ENCODE measurements at regions of chr6 and their contacts with region 1.

Region 1: GRCh38 chr6:27132532-27133280 is 114.8 kb upstream of the PRSS16 start:
- DNase-seq: no peak
- ATAC-seq: peak; percentile 84
- H3K4me3 ChIP-seq: peak overlapping the region; percentile 70 to 81 (median 74)
- H3K4me3 Mint-ChIP-seq: no peak overlapping the region
- H3K27ac ChIP-seq: peak overlapping the region; percentile 83
- H3K27ac Mint-ChIP-seq: no peak overlapping the region
- H3K4me1 ChIP-seq: peaks cover 14 to 24% of the 10 kb centered on the region in 2 donors
- H3K4me1 Mint-ChIP-seq: peaks cover 23% of the 10 kb centered on the region
- H3K27me3 ChIP-seq: no peaks in the 10 kb centered on the region
- H3K27me3 Mint-ChIP-seq: no peaks in the 10 kb centered on the region
- CTCF ChIP-seq: no peak

Region 2: GRCh38 chr6:26025894-26026832 is 1106.5 kb before region 1 on chr6:
- CTCF ChIA-PET with region 1: no interaction called
- POLR2A ChIA-PET with region 1: interaction called, 4 read pairs
- intact Hi-C with region 1: loop called (anchors 1 kb)
- DNase-seq: peak; percentile 97
- ATAC-seq: peak; percentile 35
- H3K4me3 ChIP-seq: peak overlapping the region; percentile 58 to 99 (median 88)
- H3K4me3 Mint-ChIP-seq: peak overlapping the region; percentile 98
- H3K27ac ChIP-seq: peak overlapping the region; percentile 88 to 97
- H3K27ac Mint-ChIP-seq: peak overlapping the region; percentile 98
- H3K4me1 ChIP-seq: peaks cover 23 to 32% of the 10 kb centered on the region in 2 donors
- H3K4me1 Mint-ChIP-seq: peaks cover 49% of the 10 kb centered on the region
- H3K27me3 ChIP-seq: no peaks in the 10 kb centered on the region
- H3K27me3 Mint-ChIP-seq: no peaks in the 10 kb centered on the region
- CTCF ChIP-seq: peak; percentile 92

Region 3: DNA sequence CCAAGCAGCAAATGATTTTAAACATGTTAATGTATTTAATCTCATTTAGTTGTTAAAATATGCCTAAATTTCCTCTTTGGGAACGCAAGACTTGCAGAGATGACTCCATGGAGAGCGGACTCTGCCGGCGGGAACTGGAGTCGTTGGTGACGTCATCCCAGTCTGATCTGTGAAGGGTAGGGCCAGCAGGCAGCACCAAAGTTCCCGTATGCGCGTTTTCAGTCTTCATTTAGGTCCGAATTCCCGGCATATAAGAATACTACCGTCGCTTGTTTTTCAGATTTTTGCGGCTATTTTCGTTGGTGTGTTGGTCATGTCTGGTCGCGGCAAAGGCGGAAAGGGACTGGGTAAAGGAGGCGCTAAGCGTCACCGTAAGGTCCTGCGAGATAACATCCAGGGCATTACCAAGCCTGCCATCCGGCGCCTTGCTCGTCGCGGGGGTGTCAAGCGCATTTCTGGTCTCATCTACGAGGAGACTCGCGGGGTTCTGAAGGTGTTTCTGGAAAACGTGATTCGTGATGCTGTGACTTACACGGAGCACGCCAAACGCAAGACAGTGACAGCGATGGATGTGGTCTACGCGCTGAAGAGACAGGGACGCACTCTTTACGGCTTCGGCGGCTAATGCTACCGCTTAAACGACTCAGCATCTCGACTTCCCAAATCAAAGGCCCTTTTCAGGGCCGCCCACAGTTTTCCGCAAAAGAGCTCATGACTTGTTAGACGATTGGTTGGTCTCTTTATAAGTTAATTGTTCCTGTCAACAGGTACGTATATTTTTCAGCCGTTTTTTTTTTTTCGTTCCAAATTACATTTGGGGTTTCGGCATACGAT is 928.2 kb before region 1 on chr6:
- CTCF ChIA-PET with region 1: no interaction called
- POLR2A ChIA-PET with region 1: interaction called, 17 read pairs
- intact Hi-C with region 1: loop called (anchors 2 kb)
- DNase-seq: peak; percentile 96
- ATAC-seq: peak; percentile 65
- H3K4me3 ChIP-seq: peak overlapping the region; percentile 76 to 94 (median 81)
- H3K4me3 Mint-ChIP-seq: no peak overlapping the region
- H3K27ac ChIP-seq: peak overlapping the region; percentile 88 to 96
- H3K27ac Mint-ChIP-seq: no peak overlapping the region
- H3K4me1 ChIP-seq: peaks cover 26 to 38% of the 10 kb centered on the region in 2 donors
- H3K4me1 Mint-ChIP-seq: peaks cover 30% of the 10 kb centered on the region
- H3K27me3 ChIP-seq: no peaks in the 10 kb centered on the region
- H3K27me3 Mint-ChIP-seq: no peaks in the 10 kb centered on the region
- CTCF ChIP-seq: no peak

Region 4: GRCh38 chr6:26553635-26554446 is 578.9 kb before region 1 on chr6:
- CTCF ChIA-PET with region 1: no interaction called
- POLR2A ChIA-PET with region 1: no interaction called
- intact Hi-C with region 1: loop called (anchors 5 kb)
- DNase-seq: peak; percentile 92
- ATAC-seq: peak; percentile 42
- H3K4me3 ChIP-seq: peak overlapping the region; percentile 59 to 90 (median 74)
- H3K4me3 Mint-ChIP-seq: no peak overlapping the region
- H3K27ac ChIP-seq: peak overlapping the region; percentile 26 to 62
- H3K27ac Mint-ChIP-seq: no peak overlapping the region
- H3K4me1 ChIP-seq: peaks cover 15 to 45% of the 10 kb centered on the region in 2 donors
- H3K4me1 Mint-ChIP-seq: peaks cover 22% of the 10 kb centered on the region
- H3K27me3 ChIP-seq: no peaks in the 10 kb centered on the region
- H3K27me3 Mint-ChIP-seq: no peaks in the 10 kb centered on the region
- CTCF ChIP-seq: no peak

Region 5: DNA sequence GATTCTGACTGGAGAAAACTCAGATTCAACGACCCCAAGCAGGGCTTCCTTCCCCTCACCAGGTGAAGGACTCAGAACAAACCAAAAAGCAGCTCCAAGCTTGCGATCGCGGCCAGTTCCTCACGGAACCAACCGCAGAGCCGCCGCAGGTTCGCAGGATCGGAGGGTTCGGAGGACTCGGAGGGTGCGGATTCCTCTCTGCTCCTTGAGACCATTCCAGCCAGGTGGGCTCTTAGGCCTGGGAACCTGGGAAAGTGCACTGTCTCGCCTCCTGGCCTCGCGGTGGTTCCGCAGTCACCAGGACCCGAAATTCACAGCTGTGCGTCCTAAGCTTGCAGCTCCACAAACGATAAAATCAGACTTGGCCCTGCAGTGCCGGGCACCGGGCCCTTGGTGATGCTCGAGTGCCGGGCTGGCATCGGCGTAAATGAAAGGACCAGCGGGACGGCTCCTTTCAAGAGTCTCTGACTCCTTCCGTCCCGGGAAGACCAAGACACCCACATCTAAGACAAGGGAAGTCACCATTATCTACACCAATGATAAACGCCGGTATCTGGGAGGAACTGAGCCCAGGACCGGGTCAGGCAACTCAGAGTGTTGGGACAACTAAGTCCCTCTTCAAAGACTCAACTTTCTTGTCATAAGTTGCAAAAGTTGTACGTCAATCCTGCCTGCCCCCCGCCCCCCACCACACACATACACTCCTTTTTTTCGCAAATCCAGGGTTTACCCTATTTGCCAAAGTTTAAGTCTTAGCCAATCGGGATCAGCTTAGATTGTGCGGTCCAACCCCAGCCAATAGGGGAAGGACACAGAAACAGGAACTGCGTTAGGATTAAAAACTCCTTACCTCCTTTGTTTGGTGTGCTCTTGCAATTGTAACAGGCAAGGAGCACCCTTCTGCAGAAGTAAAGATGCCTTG is 45.0 kb after region 1 on chr6:
- CTCF ChIA-PET with region 1: interaction called, 7 read pairs
- POLR2A ChIA-PET with region 1: interaction called, 3 read pairs
- intact Hi-C with region 1: loop called (anchors 1 kb)
- DNase-seq: peak; percentile 90
- ATAC-seq: peak; percentile 86
- H3K4me3 ChIP-seq: peak overlapping the region; percentile 88 to 100 (median 98)
- H3K4me3 Mint-ChIP-seq: peak overlapping the region; percentile 96
- H3K27ac ChIP-seq: peak overlapping the region; percentile 34 to 78
- H3K27ac Mint-ChIP-seq: peak overlapping the region; percentile 91
- H3K4me1 ChIP-seq: peaks cover 0 to 7% of the 10 kb centered on the region in 2 donors
- H3K4me1 Mint-ChIP-seq: peaks cover 15% of the 10 kb centered on the region
- H3K27me3 ChIP-seq: no peaks in the 10 kb centered on the region
- H3K27me3 Mint-ChIP-seq: no peaks in the 10 kb centered on the region
- CTCF ChIP-seq: peak; percentile 71

Region 6: DNA sequence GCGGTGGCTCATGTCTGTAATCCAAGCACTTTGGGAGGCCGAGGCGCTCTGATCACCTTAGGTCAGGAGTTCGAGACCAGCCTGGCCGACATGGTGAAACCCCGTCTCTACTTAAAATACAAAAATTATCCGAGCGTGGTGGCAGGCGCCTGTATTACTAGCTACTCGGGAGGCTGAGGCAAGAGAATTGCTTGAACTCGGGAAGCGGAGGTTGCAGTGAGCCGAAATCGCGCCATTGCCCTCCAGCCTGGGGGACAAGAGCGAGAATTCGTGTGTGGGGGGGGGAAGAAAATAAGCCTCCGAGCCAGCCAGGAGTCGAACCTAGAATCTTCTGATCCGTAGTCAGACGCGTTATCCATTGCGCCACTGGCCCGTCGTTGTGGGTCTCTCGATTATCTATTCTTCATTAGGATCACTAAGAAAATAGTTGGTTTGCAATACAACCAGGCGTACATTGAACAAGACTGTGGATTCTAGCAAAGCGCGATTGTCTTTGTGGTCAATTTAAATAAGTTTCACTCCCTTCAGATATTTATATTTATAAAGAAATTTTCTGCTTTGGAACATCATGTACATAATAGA is 80.9 kb after region 1 on chr6:
- CTCF ChIA-PET with region 1: no interaction called
- POLR2A ChIA-PET with region 1: no interaction called
- intact Hi-C with region 1: no loop called
- DNase-seq: no peak
- ATAC-seq: no peak
- H3K4me3 ChIP-seq: no peak overlapping the region
- H3K4me3 Mint-ChIP-seq: no peak overlapping the region
- H3K27ac ChIP-seq: no peak overlapping the region
- H3K27ac Mint-ChIP-seq: no peak overlapping the region
- H3K4me1 ChIP-seq: no peaks in the 10 kb centered on the region
- H3K4me1 Mint-ChIP-seq: no peaks in the 10 kb centered on the region
- H3K27me3 ChIP-seq: peaks cover 0 to 57% (median 18%) of the 10 kb centered on the region in 4 experiments
- H3K27me3 Mint-ChIP-seq: peaks cover 48% of the 10 kb centered on the region
- CTCF ChIP-seq: no peak

Region 7: DNA sequence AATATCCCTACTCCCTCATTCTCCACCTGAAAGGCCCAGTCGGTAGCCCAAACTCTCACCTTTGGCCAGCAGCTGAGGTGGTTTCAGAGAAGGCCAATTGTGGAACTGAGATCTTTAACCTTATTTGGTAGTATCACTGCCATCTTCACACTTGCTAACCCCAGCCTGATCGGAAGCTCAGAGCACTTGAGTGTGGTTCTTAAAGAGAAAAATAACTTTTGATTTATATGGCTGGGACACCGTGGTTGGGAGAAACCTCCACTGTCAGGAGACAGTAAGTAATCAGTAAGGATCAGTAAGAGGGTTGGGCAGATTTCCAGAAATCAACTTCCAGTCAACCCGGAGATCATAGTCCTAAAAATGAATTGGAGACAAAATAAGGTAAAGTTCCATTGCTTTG is 92.0 kb after region 1 on chr6:
- CTCF ChIA-PET with region 1: no interaction called
- POLR2A ChIA-PET with region 1: no interaction called
- intact Hi-C with region 1: no loop called
- DNase-seq: no peak
- ATAC-seq: no peak
- H3K4me3 ChIP-seq: no peak overlapping the region
- H3K4me3 Mint-ChIP-seq: no peak overlapping the region
- H3K27ac ChIP-seq: no peak overlapping the region
- H3K27ac Mint-ChIP-seq: no peak overlapping the region
- H3K4me1 ChIP-seq: peaks cover 0 to 4% of the 10 kb centered on the region in 2 donors
- H3K4me1 Mint-ChIP-seq: no peaks in the 10 kb centered on the region
- H3K27me3 ChIP-seq: peaks cover 0 to 29% (median 16%) of the 10 kb centered on the region in 4 experiments
- H3K27me3 Mint-ChIP-seq: peaks cover 61% of the 10 kb centered on the region
- CTCF ChIP-seq: no peak

Region 8: DNA sequence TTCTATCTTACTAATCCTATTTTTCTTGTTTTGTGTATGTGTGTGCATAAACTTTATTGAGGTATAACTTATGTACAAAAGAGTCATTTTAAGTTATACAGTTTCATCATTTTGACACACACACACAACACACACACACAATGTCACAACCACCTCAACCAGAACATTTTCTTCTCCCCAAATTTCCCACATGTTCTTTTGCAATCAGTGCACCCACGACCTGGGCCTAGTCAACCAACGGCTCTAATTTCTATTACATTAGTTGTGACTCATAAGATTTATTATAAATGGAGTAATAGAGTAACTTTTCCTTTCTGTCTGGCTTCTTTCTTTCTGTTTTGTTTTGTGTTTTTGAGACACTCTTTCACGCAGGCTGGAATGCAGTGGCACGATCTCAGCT is 189.2 kb after region 1 on chr6:
- CTCF ChIA-PET with region 1: no interaction called
- POLR2A ChIA-PET with region 1: no interaction called
- intact Hi-C with region 1: no loop called
- DNase-seq: no peak
- ATAC-seq: no peak
- H3K4me3 ChIP-seq: no peak overlapping the region
- H3K4me3 Mint-ChIP-seq: no peak overlapping the region
- H3K27ac ChIP-seq: no peak overlapping the region
- H3K27ac Mint-ChIP-seq: no peak overlapping the region
- H3K4me1 ChIP-seq: no peaks in the 10 kb centered on the region
- H3K4me1 Mint-ChIP-seq: no peaks in the 10 kb centered on the region
- H3K27me3 ChIP-seq: peaks cover 0 to 18% (median 7%) of the 10 kb centered on the region in 4 experiments
- H3K27me3 Mint-ChIP-seq: peaks cover 42% of the 10 kb centered on the region
- CTCF ChIP-seq: no peak

Region 9: GRCh38 chr6:27864906-27865849 is 732.5 kb after region 1 on chr6:
- CTCF ChIA-PET with region 1: no interaction called
- POLR2A ChIA-PET with region 1: interaction called, 5 read pairs
- intact Hi-C with region 1: loop called (anchors 2 kb)
- DNase-seq: peak; percentile 97
- ATAC-seq: peak; percentile 80
- H3K4me3 ChIP-seq: peak overlapping the region; percentile 60 to 82 (median 69)
- H3K4me3 Mint-ChIP-seq: peak overlapping the region; percentile 97
- H3K27ac ChIP-seq: peak overlapping the region; percentile 81 to 83
- H3K27ac Mint-ChIP-seq: peak overlapping the region; percentile 97
- H3K4me1 ChIP-seq: peaks cover 13 to 35% of the 10 kb centered on the region in 2 donors
- H3K4me1 Mint-ChIP-seq: peaks cover 45% of the 10 kb centered on the region
- H3K27me3 ChIP-seq: no peaks in the 10 kb centered on the region
- H3K27me3 Mint-ChIP-seq: no peaks in the 10 kb centered on the region
- CTCF ChIP-seq: no peak